HCT116 (cell line): ENCODE measurements at regions of chr3 and their contacts with region 1.

Region 1: DNA sequence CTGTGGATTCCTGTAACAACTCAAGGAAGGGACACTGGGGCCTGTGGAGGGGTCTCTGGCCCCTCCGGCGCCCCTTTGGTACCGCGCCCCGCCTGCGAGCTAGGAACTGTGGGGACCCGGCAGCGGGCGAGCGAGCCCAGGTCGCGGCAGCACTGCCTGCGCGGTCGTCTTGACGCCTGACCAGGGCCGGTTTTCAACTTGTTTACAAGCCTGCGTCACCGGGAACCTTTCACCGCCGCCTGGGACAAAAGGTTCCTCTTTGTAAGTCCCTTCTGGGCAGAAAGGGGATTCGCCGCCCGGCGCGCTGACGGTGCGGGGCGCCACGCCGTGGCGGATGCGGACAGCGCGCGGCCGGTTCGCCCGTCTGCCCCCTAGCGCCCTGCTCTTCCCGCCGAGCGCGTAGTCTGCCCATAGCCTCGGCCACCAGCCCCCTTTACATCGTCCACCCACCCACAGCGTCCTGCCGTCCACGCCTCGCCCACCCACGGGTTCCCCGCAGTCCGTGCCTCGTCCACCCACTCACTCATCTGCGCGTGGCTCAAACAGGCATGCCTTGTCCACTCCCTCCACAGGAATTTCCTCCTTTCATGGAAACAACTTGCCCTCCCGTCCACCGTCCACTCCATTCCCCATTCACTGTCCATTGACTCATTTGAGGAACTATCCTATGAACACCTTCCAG is 5.5 kb upstream of the CFAP100 start:
- DNase-seq: peak; percentile 72
- ATAC-seq: peak; percentile 98
- H3K4me3 ChIP-seq: peak overlapping the region; percentile 31 to 41
- H3K27ac ChIP-seq: peak overlapping the region; percentile 24; the same call in 1 of the 2 replicates
- H3K4me1 ChIP-seq: peaks cover 7 to 12% of the 10 kb centered on the region in 2 experiments; a peak in 3 of 4 replicates
- H3K27me3 ChIP-seq: no peaks in the 10 kb centered on the region
- CTCF ChIP-seq: peak; percentile 89 to 100 (median 95)
- POLR2A ChIP-seq: no peak
- RAD21 ChIP-seq: peak; percentile 96

Region 2: GRCh38 chr3:126134219-126134975 is 254.9 kb before region 1 on chr3:
- CTCF ChIA-PET with region 1: no interaction called
- POLR2A ChIA-PET with region 1: no interaction called
- RAD21 ChIA-PET with region 1: no interaction called
- intact Hi-C with region 1: loop called (anchors 1 kb)
- DNase-seq: peak; percentile 39
- ATAC-seq: peak; percentile 95
- H3K4me3 ChIP-seq: no peak overlapping the region
- H3K27ac ChIP-seq: no peak overlapping the region
- H3K4me1 ChIP-seq: peaks cover 0 to under 1% of the 10 kb centered on the region in 2 experiments; a peak in 1 of 4 replicates
- H3K27me3 ChIP-seq: peaks cover 9% of the 10 kb centered on the region; the same call in 1 of the 2 replicates
- CTCF ChIP-seq: peak; percentile 68 to 92 (median 79)
- POLR2A ChIP-seq: no peak
- RAD21 ChIP-seq: peak; percentile 96

Region 3: DNA sequence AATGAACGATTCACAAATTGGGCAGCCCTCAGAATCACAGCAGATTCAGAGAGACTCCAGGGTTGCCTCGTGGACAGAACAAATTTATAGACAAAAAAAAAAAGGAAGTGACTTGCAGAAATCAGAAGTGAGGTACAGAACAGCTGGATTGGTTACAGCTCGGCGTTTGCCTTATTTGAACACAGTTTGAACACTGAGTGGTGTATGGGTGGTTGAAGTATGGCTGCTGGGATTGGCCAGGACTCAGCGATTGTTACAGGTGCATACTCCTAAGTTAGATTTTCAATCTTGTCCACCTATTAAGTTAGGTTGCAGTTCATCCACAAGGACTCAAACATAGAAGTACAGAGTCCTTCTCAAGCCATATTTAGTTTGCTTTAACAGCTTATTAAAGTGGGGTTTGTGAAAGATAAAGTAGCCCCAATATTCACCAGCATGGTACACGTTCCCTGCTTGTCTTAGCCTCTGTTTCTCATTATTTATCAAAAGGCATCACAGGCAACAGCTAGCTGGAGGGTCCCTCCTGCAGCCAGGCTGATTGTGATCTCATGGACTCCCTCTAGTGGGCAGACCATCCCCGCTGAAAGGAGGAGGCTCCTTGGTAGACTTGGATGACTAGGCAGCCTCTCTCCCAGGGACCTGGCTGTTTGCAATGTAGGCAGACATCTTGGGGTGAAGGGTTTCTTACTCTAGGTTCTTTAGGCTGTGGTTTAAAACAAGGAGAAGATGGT is 191.2 kb before region 1 on chr3:
- CTCF ChIA-PET with region 1: no interaction called
- POLR2A ChIA-PET with region 1: no interaction called
- RAD21 ChIA-PET with region 1: no interaction called
- intact Hi-C with region 1: loop called (anchors 2 kb)
- DNase-seq: peak; percentile 67
- ATAC-seq: peak; percentile 100
- H3K4me3 ChIP-seq: no peak overlapping the region
- H3K27ac ChIP-seq: no peak overlapping the region
- H3K4me1 ChIP-seq: 0 out of 4 replicates have a peak, but pooled peaks cover 0 to 4% of the 10 kb centered on the region in 2 experiments
- H3K27me3 ChIP-seq: no peaks in the 10 kb centered on the region
- CTCF ChIP-seq: peak; percentile 72 to 82 (median 78)
- POLR2A ChIP-seq: no peak
- RAD21 ChIP-seq: peak; percentile 68

Region 4: GRCh38 chr3:126245811-126246727 is 143.2 kb before region 1 on chr3:
- CTCF ChIA-PET with region 1: interaction called, 3 read pairs
- POLR2A ChIA-PET with region 1: no interaction called
- RAD21 ChIA-PET with region 1: no interaction called
- intact Hi-C with region 1: loop called (anchors 1 kb)
- DNase-seq: peak; percentile 39
- ATAC-seq: peak; percentile 89
- H3K4me3 ChIP-seq: no peak overlapping the region
- H3K27ac ChIP-seq: no peak overlapping the region
- H3K4me1 ChIP-seq: no peaks in the 10 kb centered on the region
- H3K27me3 ChIP-seq: no peaks in the 10 kb centered on the region
- CTCF ChIP-seq: peak; percentile 59 to 66 (median 63)
- POLR2A ChIP-seq: no peak
- RAD21 ChIP-seq: peak; percentile 59

Region 5: DNA sequence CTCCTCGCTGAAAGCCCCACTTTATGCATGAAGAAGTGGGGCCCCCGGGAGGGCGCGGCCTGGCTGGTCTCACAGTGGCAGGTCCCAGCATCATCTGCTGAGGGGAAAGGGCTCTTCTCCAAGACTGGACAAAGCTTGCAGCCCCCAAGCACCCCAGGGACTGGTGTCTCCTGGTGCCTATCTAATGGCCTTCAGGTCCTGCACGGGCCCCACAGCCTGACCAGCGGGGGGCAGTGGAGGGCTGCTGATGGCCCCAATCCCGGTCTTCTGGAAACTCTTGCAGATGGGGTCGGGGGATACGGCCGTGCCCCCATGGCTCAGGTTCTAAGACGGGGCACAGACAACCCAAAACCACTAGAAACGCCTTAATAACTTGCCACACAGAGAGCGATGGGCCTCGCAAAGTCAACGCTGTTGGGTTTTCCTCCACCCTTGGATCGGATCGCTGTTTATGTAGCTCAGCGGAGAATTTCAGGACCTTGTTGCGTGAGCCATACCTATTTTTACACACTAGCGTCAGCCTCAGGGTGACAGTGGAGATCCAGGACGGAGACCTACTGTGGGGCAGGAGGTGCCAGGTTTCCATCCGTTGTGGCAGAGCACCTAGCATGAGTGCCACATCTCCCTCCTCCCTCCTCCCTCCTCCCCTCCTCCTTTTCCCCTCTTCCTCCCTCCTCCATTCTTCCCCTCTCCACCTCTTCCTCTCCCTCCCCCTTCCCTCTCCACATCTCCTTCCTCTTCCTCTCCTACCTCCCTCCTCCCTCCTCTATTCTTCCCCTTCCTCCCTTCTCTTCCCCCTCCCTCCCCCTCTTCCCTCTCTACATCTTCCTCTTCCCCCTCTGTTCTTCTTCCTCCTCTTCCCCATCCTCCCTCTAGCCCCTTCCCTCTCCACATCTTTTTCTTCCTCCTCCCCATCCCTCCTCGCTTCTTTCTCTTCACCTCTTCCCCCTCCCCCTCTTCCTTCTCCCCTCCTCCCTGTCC is 129.6 kb before region 1 on chr3:
- CTCF ChIA-PET with region 1: interaction called, 4 read pairs
- POLR2A ChIA-PET with region 1: no interaction called
- RAD21 ChIA-PET with region 1: no interaction called
- intact Hi-C with region 1: loop called (anchors 2 kb)
- DNase-seq: no peak
- ATAC-seq: peak; percentile 77
- H3K4me3 ChIP-seq: no peak overlapping the region
- H3K27ac ChIP-seq: no peak overlapping the region
- H3K4me1 ChIP-seq: peaks cover 13 to 33% of the 10 kb centered on the region in 2 experiments; a peak in 3 of 4 replicates
- H3K27me3 ChIP-seq: no peaks in the 10 kb centered on the region
- CTCF ChIP-seq: peak; percentile 70 to 79 (median 78); a peak in 5 of 6 replicates
- POLR2A ChIP-seq: no peak
- RAD21 ChIP-seq: peak; percentile 83

Region 6: GRCh38 chr3:126679318-126679751 is 290.1 kb after region 1 on chr3:
- CTCF ChIA-PET with region 1: no interaction called
- POLR2A ChIA-PET with region 1: no interaction called
- RAD21 ChIA-PET with region 1: no interaction called
- intact Hi-C with region 1: no loop called
- DNase-seq: peak; percentile 68
- ATAC-seq: peak; percentile 99
- H3K4me3 ChIP-seq: no peak overlapping the region
- H3K27ac ChIP-seq: no peak overlapping the region
- H3K4me1 ChIP-seq: peaks cover 0 to 8% of the 10 kb centered on the region in 2 experiments; a peak in 1 of 4 replicates
- H3K27me3 ChIP-seq: no peaks in the 10 kb centered on the region
- CTCF ChIP-seq: peak; percentile 90 to 91 (median 90)
- POLR2A ChIP-seq: no peak
- RAD21 ChIP-seq: peak; percentile 93